ENCODE measurements at regions of chr5 and their contacts with region 1.

Region 1: GRCh38 chr5:170614720-170615119 is 110.9 kb downstream of the KCNIP1 start:
- DNase-seq: peak; percentile 98
- H3K4me3 Mint-ChIP-seq: peak overlapping the region; percentile 56
- H3K27ac Mint-ChIP-seq: peak overlapping the region; percentile 87
- H3K4me1 Mint-ChIP-seq: peaks cover 22% of the 10 kb centered on the region
- H3K27me3 Mint-ChIP-seq: peaks cover 22% of the 10 kb centered on the region
- CTCF ChIP-seq: no peak

Region 2: DNA sequence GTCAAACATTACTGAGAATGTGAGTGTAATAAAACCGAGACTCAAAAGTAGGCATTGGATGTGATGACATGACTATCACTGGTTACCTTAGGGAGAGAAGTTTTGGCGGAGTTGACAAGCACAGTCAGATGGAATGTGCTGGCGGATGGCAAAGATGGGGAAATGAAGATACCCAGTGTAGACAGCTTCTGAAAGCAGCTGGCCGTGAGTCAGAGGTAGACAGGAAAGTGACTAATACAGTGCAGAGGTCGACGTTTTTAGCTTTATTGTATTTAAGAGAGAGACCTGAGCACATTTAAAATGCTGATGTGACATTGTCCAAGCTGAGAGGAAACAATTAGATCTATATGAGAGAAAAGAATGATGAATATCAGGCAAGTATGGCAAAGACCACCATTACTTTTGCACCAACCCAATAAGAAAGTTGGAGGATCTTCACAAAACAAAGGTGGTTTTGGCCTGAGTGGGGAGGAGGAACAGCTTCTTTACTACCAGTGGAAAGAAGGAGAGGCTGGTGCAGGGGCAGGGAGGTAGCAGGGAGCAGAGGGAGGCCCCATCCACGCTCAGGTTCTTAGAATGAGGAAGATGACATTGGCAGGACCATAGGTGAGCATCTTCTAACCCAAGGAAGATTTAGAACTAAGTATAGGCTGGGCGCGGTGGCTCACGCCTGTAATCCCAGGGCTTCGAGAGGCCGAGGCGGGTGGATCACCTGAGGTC is 147.6 kb before region 1 on chr5:
- CTCF ChIA-PET with region 1: no interaction called
- POLR2A ChIA-PET with region 1: interaction called, 13 read pairs
- intact Hi-C with region 1: no loop called
- DNase-seq: peak; percentile 96
- H3K4me3 Mint-ChIP-seq: no peak overlapping the region
- H3K27ac Mint-ChIP-seq: no peak overlapping the region
- H3K4me1 Mint-ChIP-seq: no peaks in the 10 kb centered on the region
- H3K27me3 Mint-ChIP-seq: no peaks in the 10 kb centered on the region
- CTCF ChIP-seq: no peak

Region 3: DNA sequence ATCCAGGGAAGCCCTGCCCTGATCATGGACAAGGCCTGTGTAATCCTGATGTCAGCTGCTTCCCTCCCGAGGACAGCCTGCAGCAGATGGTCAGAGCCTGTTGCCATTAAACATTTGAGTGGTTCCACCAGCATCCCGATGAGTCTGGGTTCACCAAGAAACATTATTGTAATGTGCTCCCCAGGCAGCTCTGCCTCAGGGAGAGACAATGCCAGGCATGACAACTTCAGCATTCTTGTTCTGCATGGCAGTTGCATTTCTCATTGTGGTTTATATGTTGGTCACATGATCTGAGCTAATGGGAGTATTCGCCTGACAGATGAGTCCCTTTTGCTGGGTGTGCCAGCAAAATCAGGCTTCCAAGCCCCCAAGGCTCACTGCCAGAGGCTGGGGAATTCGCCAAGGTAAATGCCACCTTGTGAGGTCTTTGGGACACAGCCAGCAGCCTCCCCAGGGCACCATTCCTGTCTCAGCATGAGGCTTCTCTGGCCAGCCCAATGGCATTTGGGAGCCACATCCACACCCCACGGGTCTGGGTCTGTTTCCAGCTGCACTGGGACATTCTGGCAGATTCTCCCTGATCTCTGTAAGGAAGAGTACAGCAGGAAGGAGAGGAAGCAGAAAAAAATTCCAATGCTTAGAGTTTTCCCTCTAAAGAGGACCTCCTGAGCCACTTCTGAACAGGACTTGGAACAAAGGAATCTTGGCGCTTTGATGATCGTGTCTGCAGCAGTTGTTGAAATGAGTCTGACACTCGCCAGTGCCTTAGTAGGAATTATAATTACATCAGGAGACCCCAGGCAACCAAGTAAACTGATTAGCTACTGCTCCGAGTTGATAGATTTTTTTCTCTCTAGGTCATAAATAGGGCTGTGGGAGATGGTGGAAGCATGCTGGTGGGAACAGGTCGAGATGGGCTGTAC is 92.2 kb before region 1 on chr5:
- CTCF ChIA-PET with region 1: interaction called, 3 read pairs
- POLR2A ChIA-PET with region 1: interaction called, 10 read pairs
- intact Hi-C with region 1: no loop called
- DNase-seq: peak; percentile 90
- H3K4me3 Mint-ChIP-seq: no peak overlapping the region
- H3K27ac Mint-ChIP-seq: no peak overlapping the region
- H3K4me1 Mint-ChIP-seq: peaks cover 27% of the 10 kb centered on the region
- H3K27me3 Mint-ChIP-seq: peaks cover 27% of the 10 kb centered on the region
- CTCF ChIP-seq: no peak

Region 4: GRCh38 chr5:170597109-170597751 is 17.5 kb before region 1 on chr5:
- CTCF ChIA-PET with region 1: interaction called, 284 read pairs
- POLR2A ChIA-PET with region 1: interaction called, 23 read pairs
- intact Hi-C with region 1: loop called (anchors 1 kb)
- DNase-seq: peak; percentile 72
- H3K4me3 Mint-ChIP-seq: peak overlapping the region; percentile 20
- H3K27ac Mint-ChIP-seq: no peak overlapping the region
- H3K4me1 Mint-ChIP-seq: peaks cover 17% of the 10 kb centered on the region
- H3K27me3 Mint-ChIP-seq: peaks cover 31% of the 10 kb centered on the region
- CTCF ChIP-seq: no peak

Region 5: GRCh38 chr5:170603578-170604565 is 10.8 kb before region 1 on chr5:
- CTCF ChIA-PET with region 1: interaction called, 284 read pairs
- POLR2A ChIA-PET with region 1: interaction called, 23 read pairs
- intact Hi-C with region 1: loop called (anchors 1 kb)
- DNase-seq: peak; percentile 86
- H3K4me3 Mint-ChIP-seq: no peak overlapping the region
- H3K27ac Mint-ChIP-seq: no peak overlapping the region
- H3K4me1 Mint-ChIP-seq: peaks cover 5% of the 10 kb centered on the region
- H3K27me3 Mint-ChIP-seq: peaks cover 51% of the 10 kb centered on the region
- CTCF ChIP-seq: peak; percentile 97

Region 6: GRCh38 chr5:170848033-170848432 is 233.3 kb after region 1 on chr5:
- CTCF ChIA-PET with region 1: no interaction called
- POLR2A ChIA-PET with region 1: no interaction called
- intact Hi-C with region 1: no loop called
- DNase-seq: peak; percentile 56
- H3K4me3 Mint-ChIP-seq: no peak overlapping the region
- H3K27ac Mint-ChIP-seq: peak overlapping the region; percentile 6
- H3K4me1 Mint-ChIP-seq: peaks cover 31% of the 10 kb centered on the region
- H3K27me3 Mint-ChIP-seq: no peaks in the 10 kb centered on the region
- CTCF ChIP-seq: no peak

Measured in MCF 10A (cell line).